ENCODE measurements at regions of chr20 and their contacts with region 1.

Region 1: DNA sequence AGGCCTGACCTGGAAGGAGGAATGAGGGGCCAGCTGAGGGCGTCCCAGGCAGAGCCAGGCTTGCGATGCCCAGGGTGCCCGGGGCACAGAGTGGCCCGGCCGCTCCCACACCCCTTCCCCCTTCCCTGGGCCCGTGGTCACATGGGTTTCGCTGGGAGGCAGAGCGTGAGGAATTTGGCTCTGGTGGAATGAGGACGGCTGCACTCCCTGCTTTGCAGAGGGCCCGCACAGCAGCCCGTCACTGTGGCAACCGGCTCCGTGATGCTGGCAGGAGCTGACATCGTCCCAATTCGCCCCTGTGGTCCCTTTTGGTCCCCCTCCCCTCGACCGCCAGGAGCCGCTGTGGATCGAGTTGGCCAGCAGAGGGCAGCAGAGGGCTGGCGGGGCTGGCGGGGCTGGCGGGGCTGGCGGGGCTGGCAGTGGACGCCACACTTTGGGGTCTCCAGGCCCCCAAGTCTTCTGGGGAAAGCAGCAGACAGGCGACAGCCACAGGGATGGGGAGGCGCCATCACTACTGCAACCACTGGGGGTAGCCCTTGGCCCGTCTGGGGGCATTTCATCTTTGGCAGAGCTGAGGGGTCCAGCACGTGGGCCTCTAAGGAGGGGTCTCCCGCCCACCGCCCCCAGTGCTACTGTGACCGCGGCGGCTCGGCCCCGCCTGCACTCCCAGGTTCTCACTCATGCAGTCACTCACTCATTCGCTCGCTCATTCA is 49.6 kb upstream of the BHLHE23 start:
- DNase-seq: peak in 31 of 42 donors; percentile 9 to 77 (median 44)

Region 2: GRCh38 chr20:63167376-63168173 is 111.2 kb after region 1 on chr20:
- intact Hi-C with region 1: loop called (anchors 5 kb)
- DNase-seq: peak in 2 of 42 donors; percentile 2 to 3

Region 3: GRCh38 chr20:63230800-63231268 is 174.4 kb after region 1 on chr20:
- intact Hi-C with region 1: loop called (anchors 5 kb)
- DNase-seq: peak in 41 of 42 donors; percentile 36 to 84 (median 68)